ENCODE measurements at regions of chr18 and their contacts with region 1.

Region 1: DNA sequence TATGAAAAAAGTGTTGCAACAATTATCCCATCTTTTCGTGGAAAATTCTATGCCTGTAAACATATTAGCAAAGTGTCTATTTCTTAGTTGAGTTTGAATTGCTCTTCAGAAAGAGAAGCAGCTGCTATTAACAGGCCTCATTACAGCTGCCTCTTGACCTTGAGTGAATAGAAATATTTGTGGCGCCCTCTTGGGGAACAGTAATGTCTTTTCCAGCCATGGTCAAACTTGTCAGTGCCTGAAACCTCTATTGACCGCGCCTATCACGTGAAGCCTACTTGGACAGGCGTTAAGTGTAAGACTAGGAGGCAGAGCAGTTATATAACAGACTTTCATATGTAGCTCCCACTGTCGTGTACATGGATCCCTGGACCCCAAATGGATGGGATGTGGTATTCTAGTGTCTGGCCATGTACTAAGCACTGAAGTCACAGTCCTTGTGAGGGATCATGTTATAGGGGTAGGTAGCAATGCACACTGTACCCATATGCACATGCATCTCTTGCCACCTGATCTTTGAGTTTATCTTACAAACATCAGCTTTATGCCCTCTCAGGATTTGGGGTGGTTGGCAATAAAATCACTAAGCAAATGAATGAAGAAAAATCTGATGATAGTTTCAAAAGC is 245.0 kb downstream of the PTGR3 start:
- DNase-seq: peak; percentile 63
- ATAC-seq: peak; percentile 97
- H3K4me3 ChIP-seq: no peak overlapping the region
- H3K27ac ChIP-seq: no peak overlapping the region
- H3K4me1 ChIP-seq: no peaks in the 10 kb centered on the region
- H3K27me3 ChIP-seq: no peaks in the 10 kb centered on the region
- CTCF ChIP-seq: peak; percentile 77

Region 2: GRCh38 chr18:74942319-74942910 is 21.5 kb before region 1 on chr18:
- CTCF ChIA-PET with region 1: interaction called, 13 read pairs
- POLR2A ChIA-PET with region 1: interaction called, 4 read pairs
- intact Hi-C with region 1: no loop called
- DNase-seq: peak; percentile 50
- ATAC-seq: peak; percentile 48
- H3K4me3 ChIP-seq: no peak overlapping the region
- H3K27ac ChIP-seq: peak overlapping the region; percentile 33
- H3K4me1 ChIP-seq: peaks cover 44% of the 10 kb centered on the region
- H3K27me3 ChIP-seq: no peaks in the 10 kb centered on the region
- CTCF ChIP-seq: no peak

Region 3: DNA sequence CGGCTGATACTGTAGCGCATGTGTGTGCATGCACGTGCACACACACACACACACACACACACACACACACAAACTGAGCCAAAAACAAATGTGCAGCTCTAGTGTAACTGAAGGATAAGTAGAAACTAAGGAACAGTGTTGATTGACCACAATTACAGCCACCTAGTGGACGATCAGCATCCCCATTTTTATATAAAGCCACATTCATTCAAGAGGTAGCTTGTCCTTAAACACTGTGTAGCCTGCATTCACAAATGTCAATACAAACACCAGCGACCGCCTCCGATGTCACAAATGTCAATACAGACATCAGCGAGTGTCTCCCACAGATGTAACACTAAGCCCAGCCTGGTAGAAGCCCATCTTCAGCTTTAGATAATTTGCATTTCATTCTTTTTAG is 77.7 kb after region 1 on chr18:
- CTCF ChIA-PET with region 1: interaction called, 4 read pairs
- POLR2A ChIA-PET with region 1: no interaction called
- intact Hi-C with region 1: loop called (anchors 5 kb)
- DNase-seq: peak; percentile 50
- ATAC-seq: peak; percentile 87
- H3K4me3 ChIP-seq: no peak overlapping the region
- H3K27ac ChIP-seq: no peak overlapping the region
- H3K4me1 ChIP-seq: peaks cover 11% of the 10 kb centered on the region
- H3K27me3 ChIP-seq: no peaks in the 10 kb centered on the region
- CTCF ChIP-seq: peak; percentile 78

Region 4: DNA sequence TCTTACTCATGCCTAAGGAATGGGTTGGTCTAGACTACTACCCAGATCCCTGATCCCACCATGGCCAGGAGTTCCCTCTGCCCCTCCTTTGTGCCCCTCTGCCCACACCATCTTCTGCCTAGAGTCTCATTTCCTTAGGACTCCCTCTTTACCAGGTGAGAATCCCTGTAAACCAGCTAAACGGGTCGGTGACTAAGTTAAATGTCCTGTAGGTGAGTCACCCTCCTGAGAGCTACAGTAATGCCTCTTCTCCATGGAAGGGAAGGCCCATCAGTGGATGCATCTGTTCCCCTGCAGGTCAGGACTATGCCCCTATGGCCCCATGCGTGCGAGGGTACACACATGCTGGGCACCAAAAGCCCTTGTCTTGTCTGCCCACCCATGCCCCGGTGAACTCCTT is 219.6 kb after region 1 on chr18:
- CTCF ChIA-PET with region 1: no interaction called
- POLR2A ChIA-PET with region 1: no interaction called
- intact Hi-C with region 1: no loop called
- DNase-seq: peak; percentile 96
- ATAC-seq: peak; percentile 99
- H3K4me3 ChIP-seq: no peak overlapping the region
- H3K27ac ChIP-seq: 0 out of 2 replicates have a peak overlapping the region, but pooled peaks have one; percentile 2
- H3K4me1 ChIP-seq: peaks cover 15% of the 10 kb centered on the region
- H3K27me3 ChIP-seq: no peaks in the 10 kb centered on the region
- CTCF ChIP-seq: no peak